B cell (primary cell): ENCODE measurements at regions of chr12 and their contacts with region 1.

Region 1: GRCh38 chr12:48851883-48852733 is at the start of gene DDX23:
- DNase-seq: peak; percentile 95
- ATAC-seq: peak; percentile 97
- H3K4me3 ChIP-seq: peak within 1 kb of the TSS; percentile 76 to 97 (median 93)
- H3K4me3 Mint-ChIP-seq: peak within 1 kb of the TSS; percentile 97
- H3K27ac ChIP-seq: peak within 1 kb of the TSS; percentile 87 to 90
- H3K27ac Mint-ChIP-seq: peak within 1 kb of the TSS; percentile 98
- H3K4me1 ChIP-seq: peaks cover 14 to 25% of the 10 kb centered on the region in 2 donors
- H3K4me1 Mint-ChIP-seq: peaks cover 36% of the 10 kb centered on the region
- H3K27me3 ChIP-seq: no peaks in the 10 kb centered on the region
- H3K27me3 Mint-ChIP-seq: no peaks in the 10 kb centered on the region
- CTCF ChIP-seq: no peak
- total RNA-seq, gene DDX23: 135 and 156 TPM in 2 replicates

Region 2: DNA sequence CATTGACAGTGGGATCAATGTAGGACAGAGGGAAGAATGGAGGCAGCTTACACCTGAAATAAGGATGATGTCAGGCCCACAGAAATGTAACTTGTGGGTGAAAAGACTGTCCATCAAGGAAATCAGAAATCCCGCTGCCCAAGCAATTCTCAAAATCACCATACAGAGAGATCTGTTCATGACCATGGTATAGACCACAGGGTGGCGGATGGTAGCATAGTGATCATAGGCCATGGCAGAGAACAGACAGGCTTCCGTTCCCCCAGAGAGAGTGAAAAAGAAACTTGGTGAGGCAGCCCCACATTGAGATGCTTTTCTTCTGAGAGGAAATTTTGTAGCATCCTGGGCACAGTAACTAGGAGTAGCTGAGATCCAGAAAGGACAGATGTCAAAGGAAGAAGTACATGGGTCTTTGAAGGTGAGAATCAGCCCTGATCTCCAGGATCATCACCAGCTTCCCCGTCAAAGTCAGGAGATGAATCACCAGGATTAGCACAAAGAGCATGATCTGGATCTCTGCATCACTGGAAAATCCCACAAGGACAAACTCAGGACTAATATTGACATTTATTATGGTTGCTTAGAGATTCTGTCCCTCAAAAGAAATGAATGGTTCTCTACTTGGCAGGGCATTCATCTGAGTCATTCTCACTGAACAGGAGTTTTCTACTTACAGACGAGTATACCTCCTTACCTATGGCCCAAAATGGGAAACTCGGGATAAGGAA is 495.9 kb before region 1 on chr12:
- CTCF ChIA-PET with region 1: no interaction called
- POLR2A ChIA-PET with region 1: no interaction called
- intact Hi-C with region 1: no loop called
- DNase-seq: no peak
- ATAC-seq: no peak
- H3K4me3 ChIP-seq: no peak overlapping the region
- H3K4me3 Mint-ChIP-seq: no peak overlapping the region
- H3K27ac ChIP-seq: no peak overlapping the region
- H3K27ac Mint-ChIP-seq: no peak overlapping the region
- H3K4me1 ChIP-seq: peaks cover 0 to 2% of the 10 kb centered on the region in 2 donors
- H3K4me1 Mint-ChIP-seq: no peaks in the 10 kb centered on the region
- H3K27me3 ChIP-seq: no peaks in the 10 kb centered on the region
- H3K27me3 Mint-ChIP-seq: peaks cover 3% of the 10 kb centered on the region
- CTCF ChIP-seq: no peak

Region 3: DNA sequence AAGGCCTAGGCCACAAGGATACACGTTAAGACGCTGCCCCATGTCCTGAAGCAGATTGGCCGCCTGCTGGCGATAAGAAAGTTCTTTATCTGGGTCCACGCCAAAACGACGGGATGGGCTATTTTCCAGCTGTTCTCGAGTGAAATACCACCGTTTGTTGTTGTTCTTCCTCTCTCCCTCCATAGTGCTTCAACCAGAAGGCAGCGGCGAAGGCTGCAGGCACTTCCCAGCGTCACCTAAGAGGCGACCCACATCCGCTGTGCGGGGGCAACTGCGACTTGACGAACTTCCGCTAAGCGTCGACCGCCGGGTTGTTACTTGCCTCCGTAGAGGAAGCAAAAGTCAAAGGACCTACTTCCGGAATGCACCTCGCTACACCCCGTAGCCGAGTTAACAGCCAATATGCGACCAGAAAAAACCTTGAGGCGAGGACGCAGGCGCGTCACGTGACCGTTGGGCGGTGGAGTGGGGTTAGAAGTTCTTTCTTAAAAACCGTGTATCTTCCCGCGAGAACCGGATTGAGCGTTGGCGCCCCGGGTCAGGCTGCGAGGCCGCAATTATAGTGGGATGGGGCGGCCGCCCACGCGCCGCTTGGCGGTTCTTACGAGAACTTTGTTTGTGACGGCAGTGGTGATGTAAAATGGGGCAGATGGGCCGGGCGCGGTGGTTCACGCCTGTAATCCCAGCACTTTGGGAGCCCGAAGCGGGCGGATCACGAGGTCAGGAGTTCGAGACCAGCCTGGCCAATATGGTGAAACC is 135.4 kb before region 1 on chr12 and contains the start of gene CCNT1:
- CTCF ChIA-PET with region 1: no interaction called
- POLR2A ChIA-PET with region 1: no interaction called
- intact Hi-C with region 1: loop called (anchors 2 kb)
- DNase-seq: peak; percentile 100
- ATAC-seq: peak; percentile 91
- H3K4me3 ChIP-seq: peak within 1 kb of the TSS; percentile 82 to 98 (median 95)
- H3K4me3 Mint-ChIP-seq: peak within 1 kb of the TSS; percentile 88
- H3K27ac ChIP-seq: peak within 1 kb of the TSS; percentile 95 to 96
- H3K27ac Mint-ChIP-seq: peak within 1 kb of the TSS; percentile 97
- H3K4me1 ChIP-seq: peaks cover 19 to 27% of the 10 kb centered on the region in 2 donors
- H3K4me1 Mint-ChIP-seq: peaks cover 34% of the 10 kb centered on the region
- H3K27me3 ChIP-seq: no peaks in the 10 kb centered on the region
- H3K27me3 Mint-ChIP-seq: peaks cover 4% of the 10 kb centered on the region
- CTCF ChIP-seq: no peak
- total RNA-seq, gene CCNT1: 73.1 and 77.3 TPM in 2 replicates

Region 4: GRCh38 chr12:48765753-48766162 is 86.3 kb before region 1 on chr12:
- CTCF ChIA-PET with region 1: no interaction called
- POLR2A ChIA-PET with region 1: no interaction called
- intact Hi-C with region 1: no loop called
- DNase-seq: no peak
- ATAC-seq: no peak
- H3K4me3 ChIP-seq: no peak overlapping the region
- H3K4me3 Mint-ChIP-seq: no peak overlapping the region
- H3K27ac ChIP-seq: no peak overlapping the region
- H3K27ac Mint-ChIP-seq: no peak overlapping the region
- H3K4me1 ChIP-seq: peaks cover 0 to 10% of the 10 kb centered on the region in 2 donors
- H3K4me1 Mint-ChIP-seq: peaks cover 15% of the 10 kb centered on the region
- H3K27me3 ChIP-seq: peaks cover 0 to 4% (median 0%) of the 10 kb centered on the region in 4 experiments
- H3K27me3 Mint-ChIP-seq: no peaks in the 10 kb centered on the region
- CTCF ChIP-seq: no peak

Region 5: DNA sequence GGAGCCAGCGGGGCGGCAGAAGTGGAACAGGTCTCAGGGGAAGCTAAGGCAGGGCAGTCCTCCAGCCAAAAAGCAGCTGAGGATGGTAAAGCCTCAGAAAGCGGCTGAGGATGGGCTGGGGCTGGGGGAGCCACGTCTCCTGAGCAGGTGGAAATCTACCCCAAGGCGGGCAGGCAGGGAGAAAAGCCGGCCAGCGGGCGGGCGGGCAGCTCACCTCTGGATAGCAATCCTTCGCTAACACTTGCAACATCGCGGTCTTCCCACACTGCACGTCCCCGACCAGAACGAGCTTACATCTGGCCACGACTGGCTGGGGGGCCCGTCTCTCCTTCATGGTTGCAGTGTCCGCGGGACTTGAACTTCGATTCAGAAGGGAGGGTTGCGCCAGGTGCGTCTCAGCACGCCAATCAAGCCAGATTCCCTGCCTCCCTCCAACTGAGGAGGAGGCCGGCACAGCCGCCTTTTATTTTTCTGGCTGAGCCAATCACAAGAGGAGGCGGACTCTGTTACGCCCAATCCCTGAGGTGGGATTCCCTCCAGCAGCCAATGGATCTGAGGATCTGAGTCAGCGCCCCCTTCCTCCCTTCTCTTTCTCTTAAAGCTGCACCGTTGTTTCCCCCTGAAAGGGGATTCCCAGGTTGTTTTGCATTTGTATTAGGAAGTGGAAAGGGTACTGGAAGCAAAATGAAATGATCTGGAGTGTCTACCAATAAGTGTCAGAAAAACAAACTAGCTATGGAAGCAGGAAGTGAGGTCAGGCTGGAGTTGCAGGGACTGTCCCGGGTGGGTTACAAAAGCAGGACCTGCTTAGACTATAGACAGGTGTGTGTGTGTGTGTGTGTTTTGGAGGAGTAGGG is 13.6 kb after region 1 on chr12 and contains the start of gene RND1:
- CTCF ChIA-PET with region 1: interaction called, 82 read pairs
- POLR2A ChIA-PET with region 1: interaction called, 37 read pairs
- intact Hi-C with region 1: loop called (anchors 1 kb)
- DNase-seq: peak; percentile 93
- ATAC-seq: peak; percentile 91
- H3K4me3 ChIP-seq: peak within 1 kb of the TSS; percentile 39 to 73 (median 70)
- H3K4me3 Mint-ChIP-seq: peak within 1 kb of the TSS; percentile 93
- H3K27ac ChIP-seq: peak within 1 kb of the TSS; percentile 48 to 63
- H3K27ac Mint-ChIP-seq: peak within 1 kb of the TSS; percentile 74
- H3K4me1 ChIP-seq: peaks cover 21 to 24% of the 10 kb centered on the region in 2 donors
- H3K4me1 Mint-ChIP-seq: peaks cover 28% of the 10 kb centered on the region
- H3K27me3 ChIP-seq: peaks cover 0 to 9% (median 1%) of the 10 kb centered on the region in 4 experiments
- H3K27me3 Mint-ChIP-seq: no peaks in the 10 kb centered on the region
- CTCF ChIP-seq: no peak
- total RNA-seq, gene RND1: 18.7 and 19.5 TPM in 2 replicates

Region 6: GRCh38 chr12:48903982-48904411 is 51.9 kb after region 1 on chr12:
- CTCF ChIA-PET with region 1: interaction called, 11 read pairs
- POLR2A ChIA-PET with region 1: interaction called, 3 read pairs
- intact Hi-C with region 1: no loop called
- DNase-seq: peak; percentile 84
- ATAC-seq: peak; percentile 91
- H3K4me3 ChIP-seq: peak overlapping the region in 4 of 5 experiments; percentile 11 to 49 (median 40)
- H3K4me3 Mint-ChIP-seq: peak overlapping the region; percentile 83
- H3K27ac ChIP-seq: no peak overlapping the region
- H3K27ac Mint-ChIP-seq: no peak overlapping the region
- H3K4me1 ChIP-seq: peaks cover 11 to 12% of the 10 kb centered on the region in 2 donors
- H3K4me1 Mint-ChIP-seq: peaks cover 7% of the 10 kb centered on the region
- H3K27me3 ChIP-seq: peaks cover 0 to 5% (median 2%) of the 10 kb centered on the region in 4 experiments
- H3K27me3 Mint-ChIP-seq: peaks cover 19% of the 10 kb centered on the region
- CTCF ChIP-seq: peak; percentile 60

Region 7: GRCh38 chr12:48957141-48958048 is 105.3 kb after region 1 on chr12 and contains the start of gene ARF3:
- CTCF ChIA-PET with region 1: interaction called, 7 read pairs
- POLR2A ChIA-PET with region 1: no interaction called
- intact Hi-C with region 1: loop called (anchors 1 kb)
- DNase-seq: peak; percentile 94
- ATAC-seq: peak; percentile 95
- H3K4me3 ChIP-seq: peak within 1 kb of the TSS; percentile 59 to 96 (median 91)
- H3K4me3 Mint-ChIP-seq: peak within 1 kb of the TSS; percentile 95
- H3K27ac ChIP-seq: peak within 1 kb of the TSS; percentile 44 to 81
- H3K27ac Mint-ChIP-seq: peak within 1 kb of the TSS; percentile 92
- H3K4me1 ChIP-seq: peaks cover 34 to 36% of the 10 kb centered on the region in 2 donors
- H3K4me1 Mint-ChIP-seq: peaks cover 42% of the 10 kb centered on the region
- H3K27me3 ChIP-seq: peaks cover 0 to 3% (median 0%) of the 10 kb centered on the region in 4 experiments
- H3K27me3 Mint-ChIP-seq: no peaks in the 10 kb centered on the region
- CTCF ChIP-seq: no peak
- total RNA-seq, gene ARF3: 77.5 and 83.6 TPM in 2 replicates

Region 8: DNA sequence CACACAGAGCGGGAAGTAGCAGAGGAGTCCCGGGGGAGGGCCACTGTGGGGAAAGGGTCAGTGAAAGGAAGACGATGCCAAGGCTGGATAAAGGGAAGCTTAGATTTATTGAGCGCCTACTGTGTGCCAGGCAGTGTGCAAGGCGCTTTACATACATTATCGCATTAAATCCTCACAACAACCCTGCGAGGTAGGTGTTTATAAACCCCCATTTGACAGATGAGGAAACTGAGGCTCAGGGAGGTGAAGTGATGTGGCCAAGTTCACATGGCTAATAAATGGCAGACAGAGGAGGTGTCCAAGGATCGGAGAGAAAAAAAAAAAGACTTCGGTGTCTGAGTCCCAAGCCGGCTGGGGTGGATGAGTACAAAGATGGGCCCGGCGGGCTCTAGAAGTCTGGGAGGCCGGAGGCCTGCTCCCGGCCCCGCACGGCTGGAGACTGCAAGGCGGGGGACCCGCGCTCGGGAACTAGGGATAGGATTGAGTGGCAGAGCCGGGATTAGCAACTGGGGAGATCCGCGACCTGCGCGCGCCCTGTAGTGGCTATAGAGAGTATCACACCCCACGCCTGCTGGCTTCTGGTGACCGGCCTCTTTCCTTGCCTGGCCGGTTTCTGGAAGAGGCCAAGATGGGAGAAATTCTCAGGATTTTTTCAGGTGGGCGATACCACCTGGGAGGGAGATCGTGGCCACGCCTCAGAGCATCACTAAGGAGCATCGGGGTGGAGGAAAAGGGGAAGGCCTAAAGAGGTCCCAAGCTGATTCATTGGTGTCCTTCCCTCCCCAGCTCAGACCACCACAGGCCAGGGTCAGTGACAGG is 143.2 kb after region 1 on chr12:
- CTCF ChIA-PET with region 1: interaction called, 23 read pairs
- POLR2A ChIA-PET with region 1: interaction called, 8 read pairs
- intact Hi-C with region 1: loop called (anchors 5 kb)
- DNase-seq: peak; percentile 72
- ATAC-seq: peak; percentile 26
- H3K4me3 ChIP-seq: peak overlapping the region in 1 of 5 experiments; percentile 23
- H3K4me3 Mint-ChIP-seq: peak overlapping the region; percentile 59
- H3K27ac ChIP-seq: no peak overlapping the region
- H3K27ac Mint-ChIP-seq: no peak overlapping the region
- H3K4me1 ChIP-seq: peaks cover 37 to 44% of the 10 kb centered on the region in 2 donors
- H3K4me1 Mint-ChIP-seq: peaks cover 40% of the 10 kb centered on the region
- H3K27me3 ChIP-seq: peaks cover 0 to 72% (median 33%) of the 10 kb centered on the region in 4 experiments
- H3K27me3 Mint-ChIP-seq: peaks cover 32% of the 10 kb centered on the region
- CTCF ChIP-seq: peak; percentile 86

Region 9: GRCh38 chr12:49580572-49581535 is 728.7 kb after region 1 on chr12:
- CTCF ChIA-PET with region 1: no interaction called
- POLR2A ChIA-PET with region 1: no interaction called
- intact Hi-C with region 1: no loop called
- DNase-seq: peak; percentile 60
- ATAC-seq: peak; percentile 61
- H3K4me3 ChIP-seq: no peak overlapping the region
- H3K4me3 Mint-ChIP-seq: no peak overlapping the region
- H3K27ac ChIP-seq: no peak overlapping the region
- H3K27ac Mint-ChIP-seq: no peak overlapping the region
- H3K4me1 ChIP-seq: no peaks in the 10 kb centered on the region
- H3K4me1 Mint-ChIP-seq: peaks cover 5% of the 10 kb centered on the region
- H3K27me3 ChIP-seq: no peaks in the 10 kb centered on the region
- H3K27me3 Mint-ChIP-seq: no peaks in the 10 kb centered on the region
- CTCF ChIP-seq: peak; percentile 70